ENCODE measurements at regions of chr10 and their contacts with region 1.

Region 1: DNA sequence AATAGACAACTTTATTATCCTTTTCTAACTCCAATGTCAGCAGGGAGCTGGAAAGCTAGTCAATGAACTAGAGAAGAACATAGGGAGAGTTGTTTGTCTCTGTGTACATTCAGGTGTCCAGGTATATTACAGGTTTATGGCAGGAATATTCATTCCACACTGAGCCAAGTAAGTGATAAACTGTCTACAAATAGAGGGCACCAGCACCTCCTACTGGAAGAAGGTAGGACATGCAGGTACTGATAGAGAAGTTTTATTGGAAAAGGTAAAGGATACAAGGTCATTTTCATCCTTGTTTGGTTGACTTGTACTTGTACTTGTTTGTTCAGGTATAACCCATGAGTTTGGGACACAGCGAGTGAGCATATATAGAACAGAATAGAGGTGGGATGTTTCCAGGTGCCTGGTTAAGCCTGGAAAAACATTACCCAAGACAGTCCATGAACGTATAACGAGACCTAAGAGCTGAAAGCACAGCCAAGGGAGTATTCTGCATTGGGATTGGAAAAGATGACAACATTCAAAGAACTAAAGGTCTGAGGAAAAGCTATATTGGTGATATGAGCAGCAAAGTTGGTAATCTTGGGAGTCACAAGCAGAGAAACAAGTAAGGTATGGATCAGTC is 61.4 kb upstream of the PPP1R3C start:
- DNase-seq: peak; percentile 48
- H3K4me3 ChIP-seq: no peak overlapping the region
- H3K27ac ChIP-seq: no peak overlapping the region
- H3K4me1 ChIP-seq: no peaks in the 10 kb centered on the region
- H3K27me3 ChIP-seq: peaks cover 3 to 4% of the 10 kb centered on the region in 2 experiments
- CTCF ChIP-seq: peak; percentile 58 to 65
- POLR2A ChIP-seq: no peak

Region 2: DNA sequence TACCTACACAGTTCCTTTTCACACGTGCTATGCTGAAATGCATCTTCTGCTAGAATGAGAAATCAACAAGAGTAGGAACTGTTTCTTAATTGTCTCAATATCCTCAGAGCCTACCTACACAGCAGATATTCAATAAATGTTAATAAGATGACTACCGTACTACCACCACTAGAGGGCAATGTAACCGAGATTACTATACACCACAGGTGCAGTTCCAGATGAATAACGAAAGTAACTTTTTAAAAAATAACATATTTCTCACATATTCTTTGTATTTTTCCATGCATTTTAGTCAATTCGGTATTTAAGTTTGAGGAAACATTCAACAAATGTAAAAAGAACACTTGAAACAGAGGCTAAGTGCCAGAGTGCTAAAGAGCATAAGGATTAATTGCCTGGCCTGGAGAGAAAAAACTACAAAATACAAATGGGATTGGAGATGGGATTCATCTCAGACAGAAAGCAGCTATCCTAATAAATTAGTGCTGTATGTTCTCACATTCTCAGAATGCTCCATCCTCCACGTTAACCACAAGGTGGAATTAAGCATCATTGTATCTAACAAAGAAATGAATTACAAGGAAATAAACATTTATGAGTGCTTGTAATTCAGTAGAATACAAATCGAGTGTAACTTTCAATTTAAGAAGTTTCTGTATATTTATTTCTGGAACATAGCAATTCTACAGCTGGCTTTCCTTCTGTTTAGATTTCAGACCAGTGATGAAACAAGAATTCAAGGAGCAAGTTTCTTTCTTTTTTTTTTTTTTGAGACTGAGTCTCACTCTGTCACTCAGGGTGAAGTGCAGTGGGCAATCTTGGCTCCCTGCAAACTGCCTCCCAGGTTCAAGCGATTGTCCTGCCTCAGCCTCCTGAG is 304.4 kb before region 1 on chr10:
- CTCF ChIA-PET with region 1: no interaction called
- POLR2A ChIA-PET with region 1: no interaction called
- dilution Hi-C with region 1: no loop called
- intact Hi-C with region 1: loop called (anchors 2 kb)
- DNase-seq: peak; percentile 64
- H3K4me3 ChIP-seq: peak overlapping the region in 1 of 3 experiments; percentile 27
- H3K27ac ChIP-seq: no peak overlapping the region
- H3K4me1 ChIP-seq: peaks cover 5% of the 10 kb centered on the region
- H3K27me3 ChIP-seq: peaks cover 14 to 31% of the 10 kb centered on the region in 2 experiments
- CTCF ChIP-seq: peak; percentile 27 to 28
- POLR2A ChIP-seq: no peak

Region 3: DNA sequence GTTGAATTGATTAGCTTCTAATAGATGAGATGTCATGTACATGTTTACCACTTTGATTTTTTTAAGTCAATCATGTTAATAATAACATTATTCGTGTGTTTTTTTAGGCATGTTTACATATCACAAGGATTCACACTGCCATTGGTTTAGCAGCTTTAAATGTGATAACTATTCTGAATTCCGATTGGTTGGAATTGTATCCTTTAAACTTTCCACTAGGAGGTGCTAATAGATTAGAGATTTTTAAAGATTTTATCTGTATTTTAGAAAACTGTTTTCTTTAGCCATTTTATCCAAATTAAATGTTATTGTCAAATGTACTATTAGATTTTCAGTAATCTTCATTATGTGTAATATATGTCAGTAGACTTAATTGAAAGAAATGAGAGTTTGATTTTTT is 201.0 kb before region 1 on chr10:
- CTCF ChIA-PET with region 1: interaction called, 3 read pairs
- POLR2A ChIA-PET with region 1: no interaction called
- dilution Hi-C with region 1: no loop called
- intact Hi-C with region 1: loop called (anchors 5 kb)
- DNase-seq: peak; percentile 24
- H3K4me3 ChIP-seq: no peak overlapping the region
- H3K27ac ChIP-seq: no peak overlapping the region
- H3K4me1 ChIP-seq: no peaks in the 10 kb centered on the region
- H3K27me3 ChIP-seq: no peaks in the 10 kb centered on the region
- CTCF ChIP-seq: no peak
- POLR2A ChIP-seq: no peak

Region 4: GRCh38 chr10:91643700-91644099 is 50.6 kb before region 1 on chr10:
- CTCF ChIA-PET with region 1: interaction called, 25 read pairs
- POLR2A ChIA-PET with region 1: no interaction called
- dilution Hi-C with region 1: no loop called
- intact Hi-C with region 1: no loop called
- DNase-seq: no peak
- H3K4me3 ChIP-seq: no peak overlapping the region
- H3K27ac ChIP-seq: no peak overlapping the region
- H3K4me1 ChIP-seq: no peaks in the 10 kb centered on the region
- H3K27me3 ChIP-seq: peaks cover 3 to 14% of the 10 kb centered on the region in 2 experiments
- CTCF ChIP-seq: peak in 1 of 2 donors; percentile 12
- POLR2A ChIP-seq: no peak

Measured in endothelial cell of umbilical vein (primary cell).